Sigmoid colon (tissue), 7 donors: ENCODE measurements at regions of chr18 and their contacts with region 1.

Region 1: DNA sequence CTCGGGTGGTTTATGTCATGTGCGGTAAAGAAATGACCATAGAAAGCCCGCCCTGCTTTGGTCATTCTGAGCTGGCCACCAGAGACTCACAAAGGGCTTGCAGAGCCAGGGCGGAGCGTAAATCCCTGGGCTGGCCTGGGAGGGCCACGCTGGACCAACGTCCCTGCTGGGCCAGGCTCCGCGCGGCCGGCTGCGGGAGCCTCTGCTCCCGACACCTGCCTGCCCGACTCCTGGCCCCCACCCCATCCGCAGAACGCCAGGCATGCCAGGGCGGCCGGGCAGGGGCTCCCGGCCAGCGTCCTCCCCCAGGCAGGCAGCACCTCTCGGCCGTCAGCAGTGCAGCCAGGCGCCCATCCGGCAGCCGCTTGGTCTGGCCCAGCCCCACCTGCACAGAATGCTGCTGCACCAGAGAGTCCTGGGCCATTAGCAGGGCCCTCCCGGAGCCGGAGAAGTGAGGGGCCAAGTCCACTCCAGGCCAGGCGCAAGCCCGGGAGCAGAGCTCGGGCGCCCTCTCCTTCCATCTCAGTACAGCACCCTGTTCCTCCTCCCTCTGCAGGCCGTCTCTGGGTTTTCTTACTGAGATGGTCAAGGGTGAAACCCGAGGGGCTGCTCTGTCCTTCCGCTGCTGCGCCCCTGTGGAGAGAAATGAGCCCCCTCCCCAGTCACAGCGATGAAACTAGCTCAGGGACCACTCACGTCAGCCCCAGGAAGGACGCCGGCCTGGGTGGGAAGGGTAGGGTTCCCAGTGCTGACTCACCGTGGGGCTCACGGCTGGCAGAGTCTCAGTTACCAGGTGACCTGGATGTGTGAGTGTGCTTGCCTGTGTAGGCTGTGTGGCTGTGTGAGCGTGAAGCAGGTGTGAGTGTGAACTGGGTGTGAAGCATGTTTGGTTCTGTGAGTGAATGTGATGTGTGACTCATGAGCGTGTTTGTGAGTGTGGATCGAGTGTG is 83.3 kb downstream of the PTGR3 start:
- DNase-seq: no peak
- H3K4me3 ChIP-seq: peak overlapping the region in 1 of 4 donors; percentile 44
- H3K27ac ChIP-seq: peak overlapping the region in 1 of 4 donors; percentile 52
- H3K4me1 ChIP-seq: no peaks in the 10 kb centered on the region
- H3K27me3 ChIP-seq: no peaks in the 10 kb centered on the region
- CTCF ChIP-seq: no peak
- EP300 ChIP-seq: no peak
- POLR2A ChIP-seq: no peak

Region 2: DNA sequence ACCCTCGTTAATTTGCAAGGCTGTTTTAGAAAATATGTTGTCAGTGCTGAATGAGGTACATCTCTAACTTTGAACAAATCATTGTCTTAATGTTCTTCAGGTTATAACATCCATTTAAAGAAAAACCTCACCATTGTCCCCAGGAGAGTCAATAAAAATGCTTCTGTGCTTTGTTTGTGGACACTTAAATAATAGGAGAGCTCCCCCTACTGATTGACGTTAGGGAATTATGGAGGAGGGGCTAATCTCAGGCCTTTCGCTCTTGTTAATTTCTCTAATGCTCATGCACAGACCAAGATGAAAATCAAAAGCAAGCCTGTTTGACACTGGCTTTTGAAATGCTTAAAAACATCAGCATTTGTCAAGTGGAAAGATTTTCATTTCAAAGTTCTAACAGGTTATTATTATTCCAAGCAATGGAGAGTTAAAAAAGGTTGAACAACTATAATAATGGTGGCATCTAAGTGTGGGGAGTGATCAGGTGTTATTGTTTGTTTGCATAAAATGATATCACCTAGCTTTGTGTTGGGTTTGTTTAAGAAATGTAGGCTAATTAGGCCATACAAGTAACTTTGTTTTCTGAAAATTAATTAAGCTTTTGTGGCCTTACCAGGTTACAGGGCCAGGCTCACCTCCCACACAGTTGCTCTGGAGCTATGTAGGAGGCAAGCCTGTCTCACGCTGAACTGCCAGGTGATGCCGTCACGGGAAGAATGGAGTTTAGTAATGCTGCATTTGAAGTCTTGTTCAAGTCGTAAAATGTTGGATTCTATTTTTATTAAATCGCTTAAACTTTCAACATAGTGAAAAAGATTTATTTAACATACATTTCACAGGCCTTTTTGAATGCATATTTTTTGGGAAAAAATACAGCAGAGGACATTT is 353.6 kb after region 1 on chr18:
- intact Hi-C with region 1: loop called (anchors 10 kb)
- DNase-seq: no peak
- H3K4me3 ChIP-seq: no peak overlapping the region
- H3K27ac ChIP-seq: no peak overlapping the region
- H3K4me1 ChIP-seq: peaks cover 0 to 22% (median 5%) of the 10 kb centered on the region in 4 donors
- H3K27me3 ChIP-seq: no peaks in the 10 kb centered on the region
- CTCF ChIP-seq: peak in 2 of 4 experiments; percentile 52 to 53
- EP300 ChIP-seq: no peak
- POLR2A ChIP-seq: no peak

Region 3: GRCh38 chr18:75896865-75897264 is 771.2 kb after region 1 on chr18:
- intact Hi-C with region 1: no loop called
- DNase-seq: no peak
- H3K4me3 ChIP-seq: no peak overlapping the region
- H3K27ac ChIP-seq: no peak overlapping the region
- H3K4me1 ChIP-seq: peaks cover 0 to 11% (median 5%) of the 10 kb centered on the region in 4 donors
- H3K27me3 ChIP-seq: no peaks in the 10 kb centered on the region
- CTCF ChIP-seq: peak in 1 of 4 experiments; percentile 22
- EP300 ChIP-seq: no peak
- POLR2A ChIP-seq: no peak